Caco-2 (cell line): ENCODE measurements at regions of chr2 and their contacts with region 1.

Region 1: GRCh38 chr2:152189622-152190495 is 14.3 kb upstream of the STAM2 start:
- DNase-seq: peak; percentile 50 to 57
- H3K4me3 ChIP-seq: no peak overlapping the region
- H3K4me3 Mint-ChIP-seq: no peak overlapping the region
- H3K27ac Mint-ChIP-seq: no peak overlapping the region
- H3K4me1 ChIP-seq: peaks cover 4% of the 10 kb centered on the region; the same call in 1 of the 2 replicates
- H3K4me1 Mint-ChIP-seq: peaks cover 14% of the 10 kb centered on the region
- H3K27me3 ChIP-seq: no peaks in the 10 kb centered on the region
- H3K27me3 Mint-ChIP-seq: no peaks in the 10 kb centered on the region
- CTCF ChIP-seq: peak; percentile 78 to 83

Region 2: DNA sequence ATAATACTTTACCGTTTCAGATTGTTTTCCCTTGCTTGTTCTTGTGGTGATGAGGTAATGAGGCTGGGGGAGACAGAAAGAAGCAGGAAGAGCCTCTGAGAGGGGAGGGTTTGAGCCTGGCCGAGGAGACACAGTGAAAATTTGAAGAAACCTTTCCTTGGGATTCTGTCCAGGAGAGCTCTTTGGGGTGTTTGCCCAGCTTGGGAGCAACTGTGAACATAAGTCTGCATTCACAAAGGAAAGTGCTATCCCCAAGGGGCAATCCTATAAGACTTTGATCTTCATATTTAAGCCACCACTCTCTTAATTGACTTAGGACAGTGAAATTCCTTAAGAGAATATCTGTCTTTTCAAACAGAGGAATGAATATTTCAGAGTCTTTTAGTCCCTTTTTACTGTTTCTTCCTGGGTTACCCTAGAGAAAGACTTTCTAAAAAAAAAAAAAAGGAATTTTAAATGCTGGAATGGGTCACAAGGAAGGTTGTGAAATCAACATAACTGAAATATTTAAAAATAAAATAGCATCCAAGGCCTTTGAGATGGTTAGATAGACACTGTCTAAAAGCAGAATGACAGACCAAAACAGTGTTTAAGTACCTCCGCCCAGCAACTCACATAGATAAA is 38.2 kb after region 1 on chr2:
- CTCF ChIA-PET with region 1: no interaction called
- POLR2A ChIA-PET with region 1: no interaction called
- intact Hi-C with region 1: no loop called
- DNase-seq: peak in 1 of 2 experiments; percentile 9
- H3K4me3 ChIP-seq: no peak overlapping the region
- H3K4me3 Mint-ChIP-seq: no peak overlapping the region
- H3K27ac Mint-ChIP-seq: no peak overlapping the region
- H3K4me1 ChIP-seq: peaks cover 7% of the 10 kb centered on the region; the same call in 1 of the 2 replicates
- H3K4me1 Mint-ChIP-seq: no peaks in the 10 kb centered on the region
- H3K27me3 ChIP-seq: no peaks in the 10 kb centered on the region
- H3K27me3 Mint-ChIP-seq: no peaks in the 10 kb centered on the region
- CTCF ChIP-seq: no peak

Region 3: GRCh38 chr2:152240559-152241231 is 50.8 kb after region 1 on chr2:
- CTCF ChIA-PET with region 1: no interaction called
- POLR2A ChIA-PET with region 1: no interaction called
- intact Hi-C with region 1: loop called (anchors 5 kb)
- DNase-seq: no peak
- H3K4me3 ChIP-seq: no peak overlapping the region
- H3K4me3 Mint-ChIP-seq: no peak overlapping the region
- H3K27ac Mint-ChIP-seq: no peak overlapping the region
- H3K4me1 ChIP-seq: peaks cover 19% of the 10 kb centered on the region
- H3K4me1 Mint-ChIP-seq: peaks cover 8% of the 10 kb centered on the region
- H3K27me3 ChIP-seq: no peaks in the 10 kb centered on the region
- H3K27me3 Mint-ChIP-seq: no peaks in the 10 kb centered on the region
- CTCF ChIP-seq: no peak

Region 4: GRCh38 chr2:152470861-152471854 is 281.3 kb after region 1 on chr2:
- CTCF ChIA-PET with region 1: no interaction called
- POLR2A ChIA-PET with region 1: no interaction called
- intact Hi-C with region 1: loop called (anchors 1 kb)
- DNase-seq: no peak
- H3K4me3 ChIP-seq: no peak overlapping the region
- H3K4me3 Mint-ChIP-seq: peak overlapping the region; percentile 42
- H3K27ac Mint-ChIP-seq: peak overlapping the region; percentile 63
- H3K4me1 ChIP-seq: peaks cover 59% of the 10 kb centered on the region
- H3K4me1 Mint-ChIP-seq: peaks cover 46% of the 10 kb centered on the region
- H3K27me3 ChIP-seq: no peaks in the 10 kb centered on the region
- H3K27me3 Mint-ChIP-seq: no peaks in the 10 kb centered on the region
- CTCF ChIP-seq: no peak

Region 5: DNA sequence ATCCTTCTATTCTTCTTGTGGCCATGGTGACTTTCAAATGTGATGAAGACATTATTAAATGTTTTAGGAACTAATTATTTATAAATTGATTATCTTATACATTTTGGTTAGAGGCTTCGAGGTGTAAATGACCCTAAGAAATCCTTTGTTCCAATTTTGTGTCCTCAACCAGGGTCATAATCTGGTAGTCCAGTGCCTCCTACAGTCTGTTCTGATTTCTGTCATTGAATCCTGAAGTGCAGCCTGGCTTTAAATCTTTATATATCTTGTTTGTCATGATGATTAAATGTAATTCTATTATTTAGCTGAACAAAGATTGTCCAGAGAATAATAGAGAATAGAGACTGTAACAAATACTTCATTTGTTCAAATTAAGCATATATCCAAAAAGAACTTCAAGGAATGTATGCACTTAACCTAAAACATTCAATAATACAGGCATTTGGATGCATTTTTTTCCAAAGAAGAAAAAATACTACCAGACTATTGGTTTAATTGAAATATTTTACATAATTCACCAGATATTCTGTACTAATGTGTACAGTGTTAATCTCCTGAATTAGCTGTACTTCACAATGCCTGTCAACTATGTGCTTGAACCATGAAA is 437.6 kb after region 1 on chr2:
- CTCF ChIA-PET with region 1: no interaction called
- POLR2A ChIA-PET with region 1: no interaction called
- intact Hi-C with region 1: loop called (anchors 1 kb)
- DNase-seq: peak in 1 of 2 experiments; percentile 19
- H3K4me3 ChIP-seq: no peak overlapping the region
- H3K4me3 Mint-ChIP-seq: no peak overlapping the region
- H3K27ac Mint-ChIP-seq: no peak overlapping the region
- H3K4me1 ChIP-seq: peaks cover 7% of the 10 kb centered on the region
- H3K4me1 Mint-ChIP-seq: peaks cover 10% of the 10 kb centered on the region
- H3K27me3 ChIP-seq: no peaks in the 10 kb centered on the region
- H3K27me3 Mint-ChIP-seq: no peaks in the 10 kb centered on the region
- CTCF ChIP-seq: peak; percentile 50 to 57

Region 6: DNA sequence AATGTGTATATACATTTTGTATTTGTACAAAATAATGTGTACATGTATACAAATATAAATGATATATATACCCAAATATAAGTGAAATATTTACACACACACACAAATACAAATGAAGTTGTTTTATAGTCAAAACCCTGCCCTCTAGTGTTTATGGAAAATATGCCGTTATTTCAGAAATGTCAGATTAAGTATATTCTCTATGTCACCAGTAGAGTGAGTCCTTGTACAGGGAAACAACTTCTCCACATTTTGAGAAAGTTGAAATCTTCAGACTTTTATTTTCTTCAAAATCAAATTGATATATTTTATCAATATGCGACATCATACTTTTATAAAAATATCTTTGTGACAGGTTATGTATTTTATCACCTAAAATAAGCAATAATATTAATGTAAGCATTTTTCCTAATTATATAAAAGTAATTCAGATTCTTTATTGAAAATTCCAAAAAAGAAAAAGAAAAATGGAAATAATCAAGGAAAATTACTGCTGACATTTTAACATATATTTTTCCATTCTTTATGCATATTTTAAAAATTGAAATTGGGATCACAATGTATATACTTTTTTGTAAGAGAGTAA is 551.0 kb after region 1 on chr2:
- CTCF ChIA-PET with region 1: no interaction called
- POLR2A ChIA-PET with region 1: no interaction called
- intact Hi-C with region 1: loop called (anchors 5 kb)
- DNase-seq: peak in 1 of 2 experiments; percentile 42
- H3K4me3 ChIP-seq: no peak overlapping the region
- H3K4me3 Mint-ChIP-seq: no peak overlapping the region
- H3K27ac Mint-ChIP-seq: no peak overlapping the region
- H3K4me1 ChIP-seq: no peaks in the 10 kb centered on the region
- H3K4me1 Mint-ChIP-seq: no peaks in the 10 kb centered on the region
- H3K27me3 ChIP-seq: no peaks in the 10 kb centered on the region
- H3K27me3 Mint-ChIP-seq: no peaks in the 10 kb centered on the region
- CTCF ChIP-seq: peak; percentile 80 to 89

Region 7: DNA sequence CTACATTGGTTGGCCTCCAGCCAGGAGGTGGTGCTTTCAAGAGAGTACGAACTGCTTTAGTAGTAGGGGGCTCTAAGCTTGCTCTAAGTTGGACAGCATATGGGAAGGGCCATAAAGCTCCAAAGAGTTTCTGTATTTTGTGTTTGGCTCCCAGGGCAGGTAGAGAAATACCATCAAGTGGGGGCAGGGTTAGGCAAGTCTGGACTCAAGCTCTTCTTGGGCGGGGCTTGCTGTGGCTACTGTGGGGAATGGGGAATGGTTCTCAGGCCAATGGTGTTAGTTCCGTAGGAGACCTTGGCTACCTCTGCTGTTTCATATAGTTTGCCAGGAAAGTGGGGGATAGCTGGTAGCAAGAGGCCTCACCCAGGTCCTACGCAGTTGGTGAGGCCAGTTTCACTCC is 900.7 kb after region 1 on chr2:
- CTCF ChIA-PET with region 1: no interaction called
- POLR2A ChIA-PET with region 1: no interaction called
- intact Hi-C with region 1: no loop called
- DNase-seq: no peak
- H3K4me3 ChIP-seq: no peak overlapping the region
- H3K4me3 Mint-ChIP-seq: no peak overlapping the region
- H3K27ac Mint-ChIP-seq: no peak overlapping the region
- H3K4me1 ChIP-seq: no peaks in the 10 kb centered on the region
- H3K4me1 Mint-ChIP-seq: no peaks in the 10 kb centered on the region
- H3K27me3 ChIP-seq: no peaks in the 10 kb centered on the region
- H3K27me3 Mint-ChIP-seq: no peaks in the 10 kb centered on the region
- CTCF ChIP-seq: no peak